Activated T-helper 2 cell treated with anti-CD3 and anti-CD28 coated beads, Interferon-gamma antibody, Interleukin-2, Interleukin-4, amounts not matched to agents 10 μg/mL and 5 μg/mL and 100 μg/mL, durations not matched to agents 14 hours and 24 hours and 36 hours (primary cell): ENCODE measurements at regions of chr11 and their contacts with region 1.

Region 1: GRCh38 chr11:35082321-35083182 is 56.4 kb upstream of the CD44 start:
- DNase-seq: peak; percentile 83
- H3K4me3 Mint-ChIP-seq: peak overlapping the region; percentile 33
- H3K27ac Mint-ChIP-seq: peak overlapping the region; percentile 55
- H3K4me1 Mint-ChIP-seq: peaks cover 81% of the 10 kb centered on the region
- H3K27me3 Mint-ChIP-seq: no peaks in the 10 kb centered on the region

Region 2: GRCh38 chr11:34916015-34916842 is 166.3 kb before region 1 on chr11 and contains the starts of genes APIP and PDHX:
- intact Hi-C with region 1: loop called (anchors 5 kb)
- DNase-seq: peak; percentile 90
- H3K4me3 Mint-ChIP-seq: peak within 1 kb of the TSS; percentile 90
- H3K27ac Mint-ChIP-seq: peak within 1 kb of the TSS; percentile 91
- H3K4me1 Mint-ChIP-seq: peaks cover 29% of the 10 kb centered on the region
- H3K27me3 Mint-ChIP-seq: no peaks in the 10 kb centered on the region
- total RNA-seq, gene APIP: 28.1 and 30.7 TPM in 2 replicates
- total RNA-seq, gene PDHX: 29.7 and 30.6 TPM in 2 replicates

Region 3: GRCh38 chr11:35030716-35031213 is 51.8 kb before region 1 on chr11:
- intact Hi-C with region 1: loop called (anchors 1 kb)
- DNase-seq: no peak
- H3K4me3 Mint-ChIP-seq: peak overlapping the region; percentile 51
- H3K27ac Mint-ChIP-seq: peak overlapping the region; percentile 88
- H3K4me1 Mint-ChIP-seq: peaks cover 44% of the 10 kb centered on the region
- H3K27me3 Mint-ChIP-seq: peaks cover 17% of the 10 kb centered on the region

Region 4: DNA sequence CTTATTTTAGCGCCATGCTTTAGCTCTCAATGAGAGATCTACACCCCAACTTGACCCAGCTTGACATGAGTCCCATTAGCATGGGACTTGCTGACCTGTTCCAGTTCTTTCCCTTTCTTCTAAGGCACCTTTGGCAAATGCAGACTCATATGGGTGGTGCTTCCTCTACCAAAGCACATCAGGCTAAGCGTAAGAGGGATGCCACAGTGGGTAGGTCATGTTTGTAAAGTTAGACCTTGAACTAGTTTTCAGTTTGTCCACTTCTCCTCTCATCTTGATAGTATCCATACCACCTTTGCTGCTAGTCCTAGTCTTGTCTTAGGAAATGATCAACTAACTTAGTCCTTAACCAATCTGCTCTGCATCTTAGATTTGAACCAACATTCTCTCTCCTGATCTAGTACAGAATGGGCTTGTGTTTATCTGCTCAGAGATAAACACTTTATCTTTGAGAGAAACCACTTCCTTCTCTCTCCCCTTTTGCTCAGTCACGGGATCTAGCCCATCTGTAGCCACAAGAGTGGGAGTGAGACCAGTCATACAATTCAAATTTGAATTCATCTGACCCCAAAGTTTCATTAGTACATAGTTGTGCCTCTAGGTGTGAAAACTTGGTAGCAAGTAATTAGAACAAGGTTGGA is 15.6 kb before region 1 on chr11:
- intact Hi-C with region 1: loop called (anchors 1 kb)
- DNase-seq: no peak
- H3K4me3 Mint-ChIP-seq: no peak overlapping the region
- H3K27ac Mint-ChIP-seq: peak overlapping the region; percentile 24
- H3K4me1 Mint-ChIP-seq: peaks cover 22% of the 10 kb centered on the region
- H3K27me3 Mint-ChIP-seq: peaks cover 10% of the 10 kb centered on the region

Region 5: DNA sequence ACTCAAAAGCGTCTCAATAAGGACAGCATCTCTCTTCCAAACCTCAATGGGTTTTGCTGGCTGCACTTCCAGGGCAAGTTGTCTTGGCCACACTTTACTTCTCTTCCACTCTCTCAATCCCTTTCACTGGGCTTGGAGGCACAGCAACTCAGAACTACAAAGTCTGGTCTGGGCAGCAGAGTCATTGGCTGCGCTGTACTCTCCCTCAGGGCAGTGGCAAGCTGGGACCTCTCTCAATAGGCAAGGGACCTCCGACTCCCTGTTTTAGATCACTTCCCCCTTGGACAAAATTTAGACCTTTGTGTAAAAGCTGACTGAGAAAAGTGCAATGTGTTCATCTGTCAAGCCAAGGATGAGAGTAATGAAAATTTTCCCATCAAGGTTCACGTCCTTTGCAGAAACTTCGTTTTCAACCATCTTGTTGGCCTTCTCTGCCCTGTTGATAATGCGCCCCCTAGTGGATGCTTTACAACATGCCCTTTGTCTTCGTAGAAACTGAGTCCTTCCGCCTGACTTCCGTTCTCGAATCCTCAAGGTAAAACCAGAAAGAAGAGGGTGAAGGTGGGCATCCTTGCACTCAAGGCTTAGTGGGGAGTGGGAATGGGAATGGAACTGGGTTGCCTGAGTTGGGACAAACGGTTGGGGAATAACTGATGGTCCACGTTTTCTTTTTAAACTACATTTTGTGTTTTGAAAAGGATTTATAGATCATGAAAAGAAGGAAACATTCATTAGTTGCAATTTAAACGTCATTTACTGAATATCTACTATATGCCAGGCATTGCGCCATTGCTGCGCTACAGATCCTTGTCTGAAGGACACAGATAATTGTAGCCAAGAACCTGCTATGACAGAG is 155.5 kb after region 1 on chr11:
- intact Hi-C with region 1: loop called (anchors 5 kb)
- DNase-seq: peak; percentile 34
- H3K4me3 Mint-ChIP-seq: no peak overlapping the region
- H3K27ac Mint-ChIP-seq: no peak overlapping the region
- H3K4me1 Mint-ChIP-seq: peaks cover 78% of the 10 kb centered on the region
- H3K27me3 Mint-ChIP-seq: peaks cover 13% of the 10 kb centered on the region

Region 6: GRCh38 chr11:35343033-35343598 is 260.6 kb after region 1 on chr11:
- intact Hi-C with region 1: loop called (anchors 2 kb)
- DNase-seq: peak; percentile 74
- H3K4me3 Mint-ChIP-seq: peak overlapping the region; percentile 20
- H3K27ac Mint-ChIP-seq: peak overlapping the region; percentile 81
- H3K4me1 Mint-ChIP-seq: peaks cover 46% of the 10 kb centered on the region
- H3K27me3 Mint-ChIP-seq: no peaks in the 10 kb centered on the region